Right cardiac atrium (tissue), 5 donors: ENCODE measurements at regions of chr5 and their contacts with region 1.

Region 1: GRCh38 chr5:172640822-172641358 is at the start of gene NEURL1B:
- DNase-seq: peak; percentile 84 to 94 (median 93)
- ATAC-seq: peak; percentile 88 to 89
- H3K4me3 ChIP-seq: peak within 1 kb of the TSS; percentile 84
- H3K27ac ChIP-seq: peak within 1 kb of the TSS; percentile 91
- H3K4me1 ChIP-seq: no peaks in the 10 kb centered on the region
- H3K27me3 ChIP-seq: no peaks in the 10 kb centered on the region
- total RNA-seq, gene NEURL1B: 13.2 to 23.1 (median 18.1) TPM

Region 2: DNA sequence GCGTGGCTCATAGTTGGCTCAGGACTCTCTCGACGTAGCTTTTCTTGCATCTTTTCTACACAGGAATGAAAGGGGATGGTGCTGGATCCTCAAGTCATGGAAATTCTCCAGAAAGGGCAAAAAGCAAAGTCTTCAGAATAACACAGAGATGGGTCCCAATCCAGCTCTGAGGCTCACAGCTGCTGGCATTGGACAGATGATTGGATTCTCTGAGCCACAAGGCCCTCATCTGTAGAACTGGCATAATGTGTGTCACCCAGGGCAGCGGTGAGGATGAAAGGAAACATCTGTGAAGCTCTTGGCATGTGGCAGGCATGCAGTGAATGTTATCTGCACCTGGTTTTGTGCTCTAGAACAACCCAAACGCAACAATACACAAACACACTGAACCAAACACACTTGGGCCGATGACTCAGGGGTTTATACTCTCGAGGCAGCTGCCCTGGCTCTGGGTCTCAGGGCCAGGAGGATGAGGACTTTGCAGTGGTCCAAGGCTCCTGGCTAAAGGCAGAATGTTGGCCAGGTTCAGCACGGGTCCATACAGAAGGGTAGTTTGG is 293.3 kb before region 1 on chr5:
- intact Hi-C with region 1: no loop called
- DNase-seq: no peak
- ATAC-seq: no peak
- H3K4me3 ChIP-seq: no peak overlapping the region
- H3K27ac ChIP-seq: no peak overlapping the region
- H3K4me1 ChIP-seq: no peaks in the 10 kb centered on the region
- H3K27me3 ChIP-seq: no peaks in the 10 kb centered on the region

Region 3: DNA sequence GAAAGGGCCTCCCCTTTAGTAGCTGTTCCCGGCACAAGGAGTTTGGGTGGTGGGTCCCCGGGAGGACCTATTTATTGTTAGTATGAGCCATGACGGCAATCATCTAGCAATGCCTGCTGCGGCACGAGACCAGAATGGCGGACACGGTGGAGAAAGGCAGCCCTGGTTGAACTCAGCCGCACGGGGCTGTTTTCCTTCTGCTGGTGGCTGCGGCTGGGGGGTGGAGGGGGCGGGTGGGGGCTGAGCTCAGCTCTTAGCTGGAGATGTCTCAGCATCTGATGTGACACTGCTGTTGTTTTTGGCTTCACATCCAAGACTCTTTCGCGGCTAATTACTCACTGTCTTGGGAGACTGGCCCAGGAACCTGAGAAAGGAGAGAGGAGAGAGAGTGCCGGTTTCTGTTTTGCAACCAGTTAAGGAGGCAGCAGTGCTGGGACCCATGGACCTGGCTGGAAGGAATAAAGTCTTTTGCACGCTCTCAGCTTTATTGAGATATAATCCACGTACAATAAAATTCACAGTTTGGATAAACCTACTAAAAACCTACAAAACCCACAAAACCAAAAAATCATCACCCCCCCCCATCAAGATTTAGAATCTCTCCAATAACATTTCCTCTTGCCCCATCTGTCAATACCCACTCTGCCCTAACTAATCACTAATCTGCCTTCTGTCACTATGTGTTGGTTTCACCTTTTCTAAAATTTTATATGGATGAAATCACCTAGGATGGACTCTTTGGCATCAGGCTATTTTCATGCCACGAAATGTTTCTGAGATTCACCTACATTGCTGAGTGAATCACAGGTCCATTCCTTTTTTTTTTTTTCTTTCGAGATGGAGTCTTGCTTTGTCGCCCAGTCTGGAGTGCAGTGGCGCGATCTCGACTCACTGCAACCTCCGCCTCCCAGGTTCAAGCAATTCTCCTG is 81.6 kb before region 1 on chr5:
- intact Hi-C with region 1: loop called in 1 of 4 experiments (anchors 10 kb)
- DNase-seq: peak; percentile 66 to 85 (median 81)
- ATAC-seq: peak; percentile 45 to 68
- H3K4me3 ChIP-seq: peak overlapping the region; percentile 0
- H3K27ac ChIP-seq: peak overlapping the region; percentile 5
- H3K4me1 ChIP-seq: peaks cover 21% of the 10 kb centered on the region
- H3K27me3 ChIP-seq: no peaks in the 10 kb centered on the region